GM10248 (cell line): ENCODE measurements at regions of chr3 and their contacts with region 1.

Region 1: GRCh38 chr3:47586746-47587145 is 8.1 kb upstream of the CSPG5 start:
- DNase-seq: no peak
- CTCF ChIP-seq: no peak

Region 2: DNA sequence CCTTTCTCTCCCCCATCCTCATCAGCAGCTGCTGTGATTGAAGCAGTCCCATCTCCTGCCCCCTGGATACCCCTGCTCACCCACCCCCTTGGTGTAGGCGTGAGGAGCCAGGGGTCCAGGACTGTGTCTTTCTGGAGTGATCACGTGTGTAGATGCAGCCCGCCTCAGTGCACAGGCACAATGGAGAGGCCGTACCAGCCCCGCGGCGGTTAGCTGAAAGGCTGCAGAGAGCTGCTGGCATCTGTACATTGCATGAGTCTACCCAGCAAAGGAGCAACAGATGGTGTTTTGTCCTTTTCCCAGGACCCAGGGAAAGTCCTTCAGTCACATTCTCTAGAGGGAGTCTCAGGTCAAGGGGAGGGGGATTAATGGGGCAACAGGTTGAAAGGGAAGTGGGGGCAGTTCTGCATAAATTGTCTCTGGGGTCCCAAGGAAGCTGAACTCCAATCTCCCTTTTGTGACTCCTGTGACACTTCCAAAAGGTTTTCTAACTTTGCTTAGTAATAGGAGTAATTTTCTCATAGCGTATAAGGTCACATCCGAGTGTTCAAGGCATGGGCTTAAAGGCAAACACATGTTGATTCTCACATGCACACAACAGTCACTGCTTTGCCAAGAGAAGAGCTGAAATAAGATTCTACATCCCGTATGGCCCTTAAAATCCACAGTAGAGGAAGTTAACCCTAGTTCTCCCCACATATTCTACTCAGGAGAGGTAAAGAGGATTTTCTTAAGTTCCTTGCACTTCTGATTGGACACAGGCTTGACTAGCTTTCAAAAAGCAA is 15.2 kb before region 1 on chr3:
- CTCF ChIA-PET with region 1: interaction called, 17 read pairs
- POLR2A ChIA-PET with region 1: no interaction called
- DNase-seq: no peak
- CTCF ChIP-seq: no peak

Region 3: GRCh38 chr3:47664519-47664918 is 77.8 kb after region 1 on chr3:
- CTCF ChIA-PET with region 1: no interaction called
- POLR2A ChIA-PET with region 1: no interaction called
- DNase-seq: no peak
- CTCF ChIP-seq: peak; percentile 11